Head of caudate nucleus (tissue), 42 donors: ENCODE measurements at regions of chr5 and their contacts with region 1.

Region 1: GRCh38 chr5:150350524-150351344 is 6.8 kb upstream of the TCOF1 start:
- DNase-seq: peak; percentile 67 to 94 (median 85)

Region 2: GRCh38 chr5:150000256-150000989 is 350.3 kb before region 1 on chr5 and contains the starts of genes HMGXB3 and TIGD6:
- intact Hi-C with region 1: loop called (anchors 5 kb)
- DNase-seq: peak; percentile 80 to 96 (median 92)

Region 3: GRCh38 chr5:150272526-150272925 is 78.2 kb before region 1 on chr5:
- intact Hi-C with region 1: loop called (anchors 2 kb)
- DNase-seq: peak in 24 of 42 donors; percentile 31 to 81 (median 62)